Heart right ventricle (tissue), 16 donors: ENCODE measurements at regions of chr1 and their contacts with region 1.

Region 1: GRCh38 chr1:23908493-23909341 is 4.4 kb downstream of the CNR2 start:
- DNase-seq: no peak
- ATAC-seq: peak in 7 of 8 donors; percentile 37 to 82 (median 64)
- H3K4me3 ChIP-seq: peak overlapping the region in 1 of 10 donors; percentile 7
- H3K27ac ChIP-seq: peak overlapping the region in 1 of 10 donors; percentile 59
- H3K4me1 ChIP-seq: peaks cover 0 to 35% (median 0%) of the 10 kb centered on the region in 9 donors
- H3K27me3 ChIP-seq: peaks cover 7 to 54% (median 45%) of the 10 kb centered on the region in 7 donors
- CTCF ChIP-seq: no peak

Region 2: DNA sequence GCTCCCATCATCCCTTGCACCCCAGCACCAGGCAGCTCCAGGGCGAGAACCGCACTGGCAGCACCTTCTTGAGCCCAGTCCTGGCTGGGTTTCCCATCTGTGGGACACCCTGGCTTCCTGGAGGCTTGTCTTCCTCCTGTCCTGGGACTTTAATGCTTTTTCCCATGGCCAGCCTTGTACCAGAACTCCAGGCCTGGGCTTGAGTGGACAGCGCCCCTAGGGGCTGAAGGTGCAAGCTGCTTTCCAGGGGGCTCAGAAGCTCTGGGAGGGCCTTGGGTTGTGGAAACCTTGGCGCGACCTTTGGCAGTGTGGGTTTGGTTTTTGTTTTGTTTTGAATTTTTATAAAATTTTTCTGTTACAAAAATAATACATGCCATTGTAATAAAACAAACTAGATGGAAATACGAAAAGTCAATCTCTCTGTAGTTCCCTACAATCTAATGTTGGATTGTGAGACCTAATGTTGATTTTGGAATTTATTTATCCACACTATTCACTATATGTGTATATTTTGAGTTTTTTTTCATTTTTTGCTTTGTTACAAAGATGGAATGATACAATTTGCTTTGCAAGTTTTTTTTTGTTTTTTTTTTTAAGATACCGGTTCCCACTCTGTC is 250.9 kb before region 1 on chr1:
- intact Hi-C with region 1: no loop called
- DNase-seq: peak; percentile 34 to 51
- ATAC-seq: peak in 7 of 8 donors; percentile 33 to 82 (median 61)
- H3K4me3 ChIP-seq: no peak overlapping the region
- H3K27ac ChIP-seq: no peak overlapping the region
- H3K4me1 ChIP-seq: no peaks in the 10 kb centered on the region
- H3K27me3 ChIP-seq: peaks cover 0 to 4% (median 0%) of the 10 kb centered on the region in 7 donors
- CTCF ChIP-seq: peak; percentile 35 to 85 (median 75)

Region 3: GRCh38 chr1:23809751-23810171 is 99.0 kb before region 1 on chr1:
- intact Hi-C with region 1: loop called in 2 of 10 experiments (anchors 10 kb)
- DNase-seq: peak; percentile 62 to 75
- ATAC-seq: peak; percentile 70 to 91 (median 86)
- H3K4me3 ChIP-seq: no peak overlapping the region
- H3K27ac ChIP-seq: peak overlapping the region in 4 of 10 donors; percentile 6 to 72 (median 28)
- H3K4me1 ChIP-seq: peaks cover 0 to 27% (median 0%) of the 10 kb centered on the region in 9 donors
- H3K27me3 ChIP-seq: no peaks in the 10 kb centered on the region
- CTCF ChIP-seq: peak; percentile 49 to 92 (median 73)